ENCODE measurements at regions of chr1 and their contacts with region 1.

Region 1: GRCh38 chr1:151739590-151740375 is 18.5 kb downstream of the RIIAD1 start:
- DNase-seq: no peak
- ATAC-seq: no peak
- H3K4me3 ChIP-seq: no peak overlapping the region
- H3K4me3 Mint-ChIP-seq: no peak overlapping the region
- H3K27ac ChIP-seq: no peak overlapping the region
- H3K27ac Mint-ChIP-seq: no peak overlapping the region
- H3K4me1 ChIP-seq: no peaks in the 10 kb centered on the region
- H3K4me1 Mint-ChIP-seq: no peaks in the 10 kb centered on the region
- H3K27me3 ChIP-seq: peaks cover 0 to 6% (median 1%) of the 10 kb centered on the region in 4 experiments
- H3K27me3 Mint-ChIP-seq: no peaks in the 10 kb centered on the region
- CTCF ChIP-seq: no peak

Region 2: DNA sequence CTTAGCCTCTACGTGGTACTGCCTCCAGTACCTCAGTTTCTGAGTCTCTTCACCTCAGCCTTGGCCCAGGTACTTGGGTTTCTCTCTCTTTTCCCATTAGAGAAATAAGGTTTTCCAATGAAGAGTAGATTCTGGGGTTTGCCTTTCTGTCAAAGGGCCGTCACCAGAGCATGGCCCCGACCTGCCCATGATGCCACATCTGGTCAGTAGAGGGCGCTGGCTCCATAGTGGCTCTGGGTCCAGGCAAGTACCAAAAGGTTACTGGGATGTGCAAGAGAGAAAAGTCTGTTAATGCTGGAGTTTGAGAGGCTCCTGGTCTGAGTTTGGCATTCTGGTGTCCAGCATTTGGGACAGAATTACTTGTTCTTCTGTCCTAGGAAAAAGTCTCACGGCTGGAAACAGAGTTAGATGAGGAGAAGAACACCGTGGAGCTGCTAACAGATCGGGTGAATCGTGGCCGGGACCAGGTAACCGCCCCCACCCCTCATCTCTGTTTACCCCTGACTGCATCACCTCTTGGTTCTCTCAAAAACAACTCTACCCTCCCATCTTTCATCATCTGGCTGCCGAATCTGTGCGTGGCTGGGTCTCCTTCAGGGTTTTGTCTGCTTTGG is 205.0 kb before region 1 on chr1:
- CTCF ChIA-PET with region 1: interaction called, 4 read pairs
- POLR2A ChIA-PET with region 1: no interaction called
- intact Hi-C with region 1: loop called (anchors 2 kb)
- DNase-seq: peak; percentile 72
- ATAC-seq: peak; percentile 67
- H3K4me3 ChIP-seq: no peak overlapping the region
- H3K4me3 Mint-ChIP-seq: no peak overlapping the region
- H3K27ac ChIP-seq: no peak overlapping the region
- H3K27ac Mint-ChIP-seq: no peak overlapping the region
- H3K4me1 ChIP-seq: peaks cover 5 to 7% of the 10 kb centered on the region in 2 donors
- H3K4me1 Mint-ChIP-seq: peaks cover 4% of the 10 kb centered on the region
- H3K27me3 ChIP-seq: no peaks in the 10 kb centered on the region
- H3K27me3 Mint-ChIP-seq: peaks cover 3% of the 10 kb centered on the region
- CTCF ChIP-seq: peak; percentile 78

Region 3: GRCh38 chr1:151773702-151774101 is 33.9 kb after region 1 on chr1:
- CTCF ChIA-PET with region 1: no interaction called
- POLR2A ChIA-PET with region 1: no interaction called
- intact Hi-C with region 1: no loop called
- DNase-seq: no peak
- ATAC-seq: no peak
- H3K4me3 ChIP-seq: no peak overlapping the region
- H3K4me3 Mint-ChIP-seq: no peak overlapping the region
- H3K27ac ChIP-seq: no peak overlapping the region
- H3K27ac Mint-ChIP-seq: no peak overlapping the region
- H3K4me1 ChIP-seq: no peaks in the 10 kb centered on the region
- H3K4me1 Mint-ChIP-seq: no peaks in the 10 kb centered on the region
- H3K27me3 ChIP-seq: no peaks in the 10 kb centered on the region
- H3K27me3 Mint-ChIP-seq: no peaks in the 10 kb centered on the region
- CTCF ChIP-seq: no peak